IMR-90 (cell line): ENCODE measurements at regions of chr6 and their contacts with region 1.

Region 1: DNA sequence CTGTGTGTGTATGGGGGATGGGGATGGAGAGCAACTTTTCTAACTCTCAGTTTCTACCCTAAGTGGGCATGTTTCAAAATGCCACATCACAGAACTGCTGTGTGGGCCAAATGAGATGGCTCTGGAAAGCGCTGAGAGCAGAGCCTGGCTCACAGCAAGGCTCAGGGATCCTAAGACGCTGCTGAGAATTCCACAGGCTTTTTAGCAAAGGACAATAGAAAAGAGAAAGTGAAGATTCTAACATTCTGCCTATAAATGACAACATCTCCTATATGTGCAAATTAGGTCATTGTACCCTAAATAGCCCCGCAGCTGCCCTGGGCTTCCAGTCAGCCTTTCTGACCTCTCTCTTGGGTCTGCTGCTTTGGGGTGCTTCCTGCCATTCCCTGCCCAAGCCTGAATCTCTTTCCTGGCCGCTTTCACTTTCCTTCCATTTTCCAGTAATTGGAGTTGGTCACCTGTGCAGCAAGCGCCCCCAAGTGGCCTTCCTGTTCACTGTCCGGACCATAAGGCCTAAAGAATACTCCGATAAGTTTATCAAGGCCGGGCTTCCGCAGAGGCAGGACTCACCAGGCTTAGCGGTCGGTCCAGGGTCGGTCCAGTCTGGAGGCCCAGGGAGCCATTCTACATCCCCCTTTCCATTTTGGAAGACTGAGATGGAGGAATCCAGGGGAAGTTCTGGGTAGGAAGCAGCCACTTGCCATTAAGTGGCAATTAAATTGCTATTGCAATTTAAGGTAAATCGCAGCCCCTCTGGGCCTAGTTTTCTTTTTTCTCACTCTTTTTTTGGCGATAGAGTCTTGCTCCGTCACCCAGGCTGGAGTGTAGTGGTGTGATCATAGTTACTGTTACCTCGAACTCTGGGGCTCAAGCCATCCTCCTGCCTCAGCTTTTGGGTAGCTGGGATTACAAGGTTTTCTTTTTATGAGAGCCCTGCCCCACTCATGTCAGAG is 6.6 kb upstream of the DDR1 start:
- DNase-seq: peak; percentile 90
- ATAC-seq: peak; percentile 88
- H3K4me3 ChIP-seq: peak overlapping the region; percentile 23; the same call in 1 of the 2 replicates
- H3K27ac ChIP-seq: peak overlapping the region; percentile 77
- H3K4me1 ChIP-seq: peaks cover 14% of the 10 kb centered on the region
- H3K27me3 ChIP-seq: no peaks in the 10 kb centered on the region
- CTCF ChIP-seq: peak; percentile 97
- POLR2A ChIP-seq: no peak
- RAD21 ChIP-seq: peak; percentile 94

Region 2: DNA sequence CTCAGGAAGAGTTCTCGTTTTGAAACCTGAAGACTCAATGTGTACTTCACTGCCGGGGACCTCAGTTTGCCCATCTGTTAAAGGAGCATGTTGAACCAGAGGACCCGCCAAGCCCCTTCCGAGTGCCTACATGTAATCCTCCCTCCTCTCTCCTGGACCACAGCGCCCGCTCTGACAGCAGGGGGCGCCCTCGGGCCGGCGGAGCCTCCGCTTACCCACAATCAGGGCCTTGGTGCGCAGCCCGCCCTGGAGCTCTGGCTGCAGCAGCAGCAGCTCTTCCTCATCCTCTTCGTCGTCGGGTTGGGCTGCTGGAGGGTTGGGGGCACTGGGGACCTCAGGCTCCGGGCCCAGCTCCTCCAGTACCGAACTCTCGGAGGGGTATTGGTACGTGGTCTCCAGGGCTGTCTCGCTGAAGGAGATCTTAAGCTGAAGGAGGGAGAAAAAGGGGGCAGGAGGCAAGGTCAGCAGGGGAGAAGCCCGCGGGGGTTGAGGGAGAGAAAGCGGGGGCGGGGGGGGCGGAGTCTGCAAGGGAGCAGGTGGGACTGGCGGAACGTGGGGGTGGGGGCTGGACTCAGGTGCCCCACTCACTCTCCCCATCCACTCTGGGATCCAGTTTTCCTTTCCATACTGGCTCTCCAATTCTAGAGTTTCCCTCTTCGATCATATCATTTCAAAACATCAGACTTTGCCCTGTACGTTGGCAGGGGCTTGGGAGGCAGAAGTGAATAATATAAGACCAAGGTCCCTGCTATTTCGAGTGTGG is 198.6 kb before region 1 on chr6:
- CTCF ChIA-PET with region 1: no interaction called
- POLR2A ChIA-PET with region 1: no interaction called
- dilution Hi-C with region 1: no loop called
- in situ Hi-C with region 1: loop called (anchors 5 kb)
- intact Hi-C with region 1: loop called (anchors 1 kb)
- DNase-seq: peak; percentile 73
- ATAC-seq: peak; percentile 36
- H3K4me3 ChIP-seq: no peak overlapping the region
- H3K27ac ChIP-seq: peak overlapping the region; percentile 49
- H3K4me1 ChIP-seq: peaks cover 14% of the 10 kb centered on the region
- H3K27me3 ChIP-seq: no peaks in the 10 kb centered on the region
- CTCF ChIP-seq: peak; percentile 93
- POLR2A ChIP-seq: no peak; the same call in 1 of the 2 replicates
- RAD21 ChIP-seq: peak; percentile 95

Region 3: DNA sequence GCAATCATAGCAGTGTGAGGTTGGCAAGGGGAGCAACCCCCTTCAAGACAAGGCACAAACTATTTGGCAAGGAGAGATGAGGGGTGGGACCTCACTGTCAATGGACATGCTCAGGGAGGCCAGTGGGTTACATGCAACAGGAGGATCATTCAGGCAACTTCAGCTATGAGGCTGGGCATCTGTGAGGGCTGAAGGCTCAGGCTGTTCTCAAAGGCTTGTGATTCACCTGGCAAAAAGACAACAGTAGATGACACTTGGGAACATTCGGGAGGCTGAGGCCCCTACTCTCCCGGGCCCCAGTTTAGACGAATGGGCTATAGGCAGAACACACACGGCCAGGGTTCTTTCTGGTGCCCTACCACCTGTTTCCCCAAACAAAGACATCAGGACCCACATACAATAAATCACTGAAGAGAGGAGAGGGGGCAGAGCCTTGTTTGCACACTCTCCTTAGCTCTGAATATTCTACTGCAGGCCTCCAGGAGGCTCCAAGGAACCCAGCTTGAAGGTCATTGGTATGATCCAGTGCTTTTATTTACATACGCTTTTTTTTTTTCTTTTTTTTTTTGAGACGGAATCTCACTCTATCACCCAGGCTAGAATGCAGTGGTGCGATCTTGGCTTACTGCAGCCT is 149.7 kb before region 1 on chr6:
- CTCF ChIA-PET with region 1: no interaction called
- POLR2A ChIA-PET with region 1: no interaction called
- dilution Hi-C with region 1: no loop called
- in situ Hi-C with region 1: no loop called
- intact Hi-C with region 1: loop called (anchors 1 kb)
- DNase-seq: peak; percentile 71
- ATAC-seq: peak; percentile 33
- H3K4me3 ChIP-seq: no peak overlapping the region
- H3K27ac ChIP-seq: peak overlapping the region; percentile 2; the same call in 1 of the 2 replicates
- H3K4me1 ChIP-seq: peaks cover 2% of the 10 kb centered on the region
- H3K27me3 ChIP-seq: no peaks in the 10 kb centered on the region
- CTCF ChIP-seq: peak; percentile 50
- POLR2A ChIP-seq: no peak
- RAD21 ChIP-seq: peak; percentile 45

Region 4: GRCh38 chr6:30844091-30844535 is 33.6 kb before region 1 on chr6:
- CTCF ChIA-PET with region 1: interaction called, 4 read pairs
- POLR2A ChIA-PET with region 1: no interaction called
- dilution Hi-C with region 1: no loop called
- in situ Hi-C with region 1: loop called (anchors 5 kb)
- intact Hi-C with region 1: loop called (anchors 2 kb)
- DNase-seq: peak; percentile 53
- ATAC-seq: peak; percentile 98
- H3K4me3 ChIP-seq: no peak overlapping the region
- H3K27ac ChIP-seq: peak overlapping the region; percentile 16; the same call in 1 of the 2 replicates
- H3K4me1 ChIP-seq: peaks cover 14% of the 10 kb centered on the region
- H3K27me3 ChIP-seq: no peaks in the 10 kb centered on the region
- CTCF ChIP-seq: no peak; the same call in 1 of the 2 replicates
- POLR2A ChIP-seq: no peak
- RAD21 ChIP-seq: peak; percentile 35